ENCODE measurements at regions of chr7 and their contacts with region 1.

Region 1: GRCh38 chr7:150368096-150368883 is at the start of gene REPIN1:
- DNase-seq: no peak
- H3K4me3 ChIP-seq: peak within 1 kb of the TSS; percentile 58
- H3K27me3 ChIP-seq: no peaks in the 10 kb centered on the region
- CTCF ChIP-seq: no peak
- polyA plus RNA-seq, gene REPIN1: 41.3 and 65.7 TPM in 2 replicates

Region 2: DNA sequence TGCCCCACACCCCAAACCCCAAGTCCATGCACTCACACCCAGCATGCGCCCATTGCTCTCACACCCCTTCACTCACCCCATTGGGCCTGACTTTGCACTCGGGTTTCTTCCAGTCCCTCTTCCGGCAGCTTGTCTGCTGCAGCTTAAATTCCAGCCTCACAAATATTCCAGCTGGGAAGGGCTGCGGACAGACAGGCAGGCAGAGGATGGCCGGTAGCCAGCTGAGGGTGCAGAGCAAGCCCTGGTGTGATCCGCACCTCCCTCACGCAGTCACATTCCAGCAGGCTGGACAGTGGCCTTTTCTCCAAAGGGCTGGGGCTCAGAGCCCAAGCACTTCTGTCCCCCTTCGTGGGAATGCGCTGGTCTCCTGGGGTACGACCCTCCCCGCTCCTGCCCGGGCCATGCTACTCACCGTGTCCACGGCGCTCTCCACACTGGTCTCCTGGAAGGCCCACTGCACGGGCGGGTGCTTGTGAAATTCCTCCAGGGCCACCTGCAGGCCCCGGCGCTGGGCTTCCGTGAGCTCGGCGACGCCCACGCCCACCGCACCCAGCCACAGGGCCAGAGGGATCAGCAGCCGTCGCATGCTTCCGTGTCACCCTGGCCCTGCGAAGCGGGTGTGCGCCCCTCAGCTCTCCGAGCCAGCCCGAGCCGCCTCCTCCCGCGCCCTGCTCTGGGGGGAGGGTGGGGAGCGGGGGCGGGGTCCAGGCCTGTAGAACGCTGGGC is 28.1 kb before region 1 on chr7:
- CTCF ChIA-PET with region 1: no interaction called
- POLR2A ChIA-PET with region 1: interaction called, 10 read pairs
- DNase-seq: no peak
- H3K4me3 ChIP-seq: peak overlapping the region; percentile 17; the same call in 1 of the 2 replicates
- H3K27me3 ChIP-seq: peaks cover 20% of the 10 kb centered on the region
- CTCF ChIP-seq: no peak

Region 3: GRCh38 chr7:150356265-150356897 is 11.9 kb before region 1 on chr7:
- CTCF ChIA-PET with region 1: interaction called, 25 read pairs
- POLR2A ChIA-PET with region 1: interaction called, 4 read pairs
- DNase-seq: no peak
- H3K4me3 ChIP-seq: no peak overlapping the region
- H3K27me3 ChIP-seq: no peaks in the 10 kb centered on the region; the same call in 1 of the 2 replicates
- CTCF ChIP-seq: peak; percentile 73

Region 4: DNA sequence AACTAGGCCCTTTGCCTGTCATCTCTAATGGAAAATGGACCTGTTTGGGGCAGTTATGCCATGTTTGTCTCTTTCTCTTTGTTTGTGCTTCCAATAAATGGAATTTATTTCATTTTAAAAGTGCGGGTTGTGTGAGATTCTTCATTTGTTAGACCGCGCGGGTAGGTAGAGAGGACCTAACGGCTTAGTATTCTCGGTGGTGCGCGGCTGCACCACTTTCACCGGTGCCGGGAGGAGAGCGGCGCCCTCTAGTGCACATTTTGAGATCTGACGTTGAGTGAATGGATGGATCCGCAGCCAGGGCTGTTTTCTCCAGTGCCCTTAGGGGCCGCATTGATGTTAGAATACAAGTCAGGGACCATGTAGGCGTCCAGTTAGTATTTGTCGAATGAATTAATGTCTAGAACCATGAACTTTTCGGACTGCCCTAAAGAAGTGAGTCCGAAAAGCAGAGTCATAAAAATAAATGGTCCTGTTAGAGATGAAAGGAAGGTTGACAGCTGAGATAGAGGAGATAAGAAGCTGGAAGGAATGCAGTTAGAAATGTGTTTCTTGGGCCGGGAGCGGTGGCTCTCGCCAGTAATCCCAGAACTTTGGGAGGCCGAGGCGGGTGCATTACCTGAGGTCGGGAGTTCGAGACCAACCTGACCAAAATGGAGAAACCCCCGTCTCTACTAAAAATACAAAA is 52.8 kb after region 1 on chr7:
- CTCF ChIA-PET with region 1: interaction called, 10 read pairs
- POLR2A ChIA-PET with region 1: no interaction called
- DNase-seq: no peak
- H3K4me3 ChIP-seq: no peak overlapping the region
- H3K27me3 ChIP-seq: 0 out of 2 replicates have a peak, but pooled peaks cover 2% of the 10 kb centered on the region
- CTCF ChIP-seq: peak; percentile 87

Region 5: DNA sequence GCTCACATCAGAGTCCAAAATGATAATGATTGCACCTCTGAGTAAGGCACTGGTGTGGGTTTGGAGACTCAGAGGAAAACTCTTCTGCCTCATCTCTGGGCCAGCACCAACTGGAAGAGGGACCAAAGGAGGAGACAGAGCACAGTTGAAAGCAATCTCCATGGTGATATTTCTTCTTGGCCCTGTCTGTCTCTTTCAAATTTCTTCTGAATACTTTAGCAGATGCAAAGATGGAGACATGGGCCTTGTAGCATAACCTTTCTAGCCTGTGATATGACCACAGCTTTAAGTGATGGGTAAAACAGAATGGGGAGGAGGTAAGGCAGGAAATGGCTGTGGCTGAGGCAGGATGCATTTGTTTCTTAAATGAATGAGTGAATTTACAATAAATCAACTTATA is 134.2 kb after region 1 on chr7:
- CTCF ChIA-PET with region 1: no interaction called
- POLR2A ChIA-PET with region 1: no interaction called
- DNase-seq: no peak
- H3K4me3 ChIP-seq: no peak overlapping the region
- H3K27me3 ChIP-seq: no peaks in the 10 kb centered on the region
- CTCF ChIP-seq: no peak